HEK293 (cell line): ENCODE measurements at regions of chr2 and their contacts with region 1.

Region 1: DNA sequence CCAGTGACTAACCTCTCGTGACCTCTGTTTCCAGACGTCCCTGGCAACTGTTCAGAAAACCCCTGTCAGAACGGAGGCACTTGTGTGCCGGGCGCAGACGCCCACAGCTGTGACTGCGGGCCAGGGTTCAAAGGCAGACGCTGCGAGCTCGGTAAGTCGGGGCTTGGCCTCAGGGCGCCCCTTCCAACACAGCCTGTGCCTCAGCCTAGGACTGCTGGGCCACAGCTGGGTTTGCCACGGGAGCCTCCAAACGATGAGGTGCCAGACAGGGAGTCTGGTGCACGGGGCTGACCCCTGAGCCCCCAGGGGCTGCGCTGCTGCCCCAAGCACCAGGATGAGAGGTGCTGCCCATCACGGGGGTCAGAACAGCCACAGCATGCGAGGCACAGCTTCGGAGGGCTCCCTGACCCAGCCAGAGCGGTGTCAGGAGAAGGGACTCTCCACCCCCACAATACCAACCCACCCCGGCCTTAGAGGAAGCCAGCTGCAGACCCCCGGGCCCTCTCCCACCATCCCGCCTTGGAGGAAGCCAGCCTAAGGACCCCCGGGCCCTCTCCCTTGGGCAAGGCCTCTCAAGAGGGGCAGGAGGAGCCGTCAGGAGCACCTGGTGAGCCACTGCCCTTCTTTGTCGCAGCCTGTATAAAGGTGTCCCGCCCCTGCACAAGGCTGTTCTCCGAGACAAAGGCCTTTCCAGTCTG is 20.3 kb downstream of the MTERF4 start:
- H3K4me3 ChIP-seq: no peak overlapping the region
- H3K27ac ChIP-seq: no peak overlapping the region
- H3K4me1 ChIP-seq: no peaks in the 10 kb centered on the region
- CTCF ChIP-seq: no peak

Region 2: DNA sequence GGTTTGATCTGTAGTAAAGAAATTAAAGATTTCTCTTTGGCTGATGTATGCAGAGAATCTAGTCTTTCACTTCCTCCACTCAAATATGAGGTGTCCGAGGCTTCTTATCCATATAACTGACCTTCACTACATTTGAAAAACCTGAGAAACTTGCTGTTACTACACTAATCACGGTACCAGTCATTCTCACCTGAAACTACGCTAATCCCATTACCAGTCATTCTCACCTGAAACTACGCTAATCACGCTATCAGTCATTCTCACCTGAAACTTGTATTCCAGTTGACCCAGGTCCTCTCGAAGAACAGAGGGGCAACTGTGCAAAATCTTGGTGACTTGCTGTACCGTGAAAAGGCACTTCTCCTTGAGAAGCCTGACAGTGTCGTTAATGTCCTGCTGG is 15.2 kb after region 1 on chr2:
- CTCF ChIA-PET with region 1: interaction called, 16 read pairs
- POLR2A ChIA-PET with region 1: no interaction called
- H3K4me3 ChIP-seq: no peak overlapping the region
- H3K27ac ChIP-seq: no peak overlapping the region
- H3K4me1 ChIP-seq: no peaks in the 10 kb centered on the region
- CTCF ChIP-seq: no peak

Region 3: GRCh38 chr2:241659150-241659739 is 577.5 kb after region 1 on chr2:
- CTCF ChIA-PET with region 1: interaction called, 11 read pairs
- POLR2A ChIA-PET with region 1: no interaction called
- H3K4me3 ChIP-seq: no peak overlapping the region
- H3K27ac ChIP-seq: no peak overlapping the region
- H3K4me1 ChIP-seq: no peaks in the 10 kb centered on the region
- CTCF ChIP-seq: peak; percentile 72